ENCODE measurements at regions of chrX and their contacts with region 1.

Region 1: DNA sequence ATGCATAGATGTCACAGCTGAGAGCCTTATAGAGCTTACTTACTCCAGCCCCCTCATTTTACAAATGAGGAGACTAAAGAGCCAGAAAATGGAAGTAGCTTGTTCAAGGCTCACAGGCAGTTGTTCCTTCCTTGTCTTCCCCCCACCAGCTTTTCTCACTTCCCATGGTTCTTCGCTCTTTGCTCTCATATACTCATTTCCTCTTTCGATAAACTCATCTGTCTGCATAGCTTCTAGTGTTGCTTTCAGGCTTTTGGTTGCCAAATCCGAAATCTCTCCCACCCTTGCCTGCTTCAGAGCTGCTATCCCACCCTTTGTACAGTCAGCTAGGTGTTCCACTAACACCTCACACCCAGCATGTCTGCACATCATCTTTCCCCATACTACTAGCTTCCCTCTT is 25.0 kb upstream of the GJB1 start:
- DNase-seq: no peak
- ATAC-seq: peak; percentile 44
- H3K4me3 Mint-ChIP-seq: peak overlapping the region; percentile 89
- H3K27ac Mint-ChIP-seq: peak overlapping the region; percentile 90
- H3K4me1 Mint-ChIP-seq: peaks cover 15% of the 10 kb centered on the region
- H3K27me3 Mint-ChIP-seq: no peaks in the 10 kb centered on the region

Region 2: GRCh38 chrX:71139046-71139756 is 58.9 kb before region 1 on chrX:
- CTCF ChIA-PET with region 1: no interaction called
- DNase-seq: no peak
- ATAC-seq: no peak
- H3K4me3 Mint-ChIP-seq: no peak overlapping the region
- H3K27ac Mint-ChIP-seq: peak overlapping the region; percentile 9
- H3K4me1 Mint-ChIP-seq: peaks cover 12% of the 10 kb centered on the region
- H3K27me3 Mint-ChIP-seq: no peaks in the 10 kb centered on the region

Region 3: GRCh38 chrX:71181910-71182799 is 15.9 kb before region 1 on chrX:
- CTCF ChIA-PET with region 1: interaction called, 12 read pairs
- DNase-seq: peak; percentile 93
- ATAC-seq: peak; percentile 96
- H3K4me3 Mint-ChIP-seq: peak overlapping the region; percentile 83
- H3K27ac Mint-ChIP-seq: peak overlapping the region; percentile 98
- H3K4me1 Mint-ChIP-seq: peaks cover 20% of the 10 kb centered on the region
- H3K27me3 Mint-ChIP-seq: no peaks in the 10 kb centered on the region

Region 4: GRCh38 chrX:71216485-71216884 is 18.4 kb after region 1 on chrX:
- CTCF ChIA-PET with region 1: no interaction called
- DNase-seq: no peak
- ATAC-seq: no peak
- H3K4me3 Mint-ChIP-seq: no peak overlapping the region
- H3K27ac Mint-ChIP-seq: no peak overlapping the region
- H3K4me1 Mint-ChIP-seq: no peaks in the 10 kb centered on the region
- H3K27me3 Mint-ChIP-seq: no peaks in the 10 kb centered on the region

Region 5: GRCh38 chrX:71254092-71254941 is 56.3 kb after region 1 on chrX and contains the start of gene ZMYM3:
- CTCF ChIA-PET with region 1: interaction called, 11 read pairs
- DNase-seq: peak; percentile 89
- ATAC-seq: peak; percentile 92
- H3K4me3 Mint-ChIP-seq: peak within 1 kb of the TSS; percentile 83
- H3K27ac Mint-ChIP-seq: peak within 1 kb of the TSS; percentile 90
- H3K4me1 Mint-ChIP-seq: peaks cover 29% of the 10 kb centered on the region
- H3K27me3 Mint-ChIP-seq: no peaks in the 10 kb centered on the region
- total RNA-seq, gene ZMYM3: 25.8 to 29.1 TPM

Region 6: DNA sequence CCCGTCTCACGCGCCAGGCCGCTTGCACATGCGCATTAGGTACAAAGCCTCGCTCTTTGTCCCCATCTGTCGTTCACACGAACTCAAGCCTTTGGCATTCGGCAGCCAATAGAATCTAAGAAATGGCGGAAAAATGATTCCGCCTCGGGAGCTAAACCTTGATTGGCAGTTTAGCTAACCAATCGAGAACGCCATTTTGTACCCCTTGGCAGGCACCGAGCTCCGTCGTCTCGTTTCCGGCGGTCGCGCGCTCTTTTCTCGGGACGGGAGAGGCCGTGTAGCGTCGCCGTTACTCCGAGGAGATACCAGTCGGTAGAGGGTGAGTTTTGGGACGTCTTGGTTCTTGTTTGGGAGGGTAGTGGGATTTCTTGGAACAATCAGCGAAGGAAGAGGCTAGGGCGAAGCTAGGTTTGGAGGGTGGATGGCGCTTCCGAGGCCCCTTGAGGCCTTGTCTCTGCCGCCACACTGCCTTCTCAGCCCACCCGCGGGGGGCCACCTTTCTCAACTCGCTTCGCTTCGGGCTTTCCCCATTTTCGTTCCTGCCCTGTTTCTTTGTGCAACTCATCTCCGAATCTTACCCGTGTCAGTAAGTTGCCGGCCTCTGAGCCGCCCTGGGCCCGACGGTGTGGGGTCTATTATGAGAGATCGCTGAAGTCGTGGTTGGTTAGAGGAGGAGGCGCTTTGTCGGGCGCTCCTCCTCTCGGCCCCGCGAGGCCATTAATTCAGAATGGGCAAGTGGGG is 85.5 kb after region 1 on chrX and contains the start of gene NONO:
- CTCF ChIA-PET with region 1: interaction called, 10 read pairs
- DNase-seq: peak; percentile 93
- ATAC-seq: peak; percentile 84
- H3K4me3 Mint-ChIP-seq: peak within 1 kb of the TSS; percentile 86
- H3K27ac Mint-ChIP-seq: peak within 1 kb of the TSS; percentile 95
- H3K4me1 Mint-ChIP-seq: peaks cover 22% of the 10 kb centered on the region
- H3K27me3 Mint-ChIP-seq: no peaks in the 10 kb centered on the region
- total RNA-seq, gene NONO: 430 to 514 TPM